ENCODE measurements at regions of chr22 and their contacts with region 1.

Region 1: DNA sequence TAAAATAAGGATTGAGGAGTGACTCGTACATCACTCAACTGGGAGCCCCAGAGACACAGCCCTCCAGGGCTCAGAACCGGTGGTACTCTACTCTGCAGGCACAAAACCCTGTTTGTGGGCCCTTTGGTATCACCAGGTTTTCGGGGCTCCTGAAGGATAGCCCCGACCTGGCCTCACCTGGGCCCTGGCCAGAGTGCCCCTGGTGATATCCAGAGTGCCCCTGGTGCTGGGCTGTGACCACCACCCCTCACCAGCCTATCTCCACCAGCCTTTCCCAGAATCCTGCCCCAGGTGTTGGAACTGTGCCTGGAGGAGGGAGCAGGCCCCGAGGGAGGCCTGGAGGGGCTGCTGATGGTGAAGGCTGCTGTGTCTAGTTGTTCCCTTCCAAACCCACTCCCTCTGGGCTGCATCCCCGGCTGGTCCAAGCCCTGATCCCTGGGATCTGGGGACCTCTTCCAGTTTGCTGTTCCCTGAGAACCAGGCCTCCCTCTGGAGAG is 2.2 kb upstream of the GGT5 start:
- DNase-seq: no peak
- H3K4me3 ChIP-seq: no peak overlapping the region
- CTCF ChIP-seq: no peak
- POLR2A ChIP-seq: no peak

Region 2: GRCh38 chr22:24146194-24146616 is 100.9 kb before region 1 on chr22:
- intact Hi-C with region 1: no loop called
- DNase-seq: no peak
- H3K4me3 ChIP-seq: no peak overlapping the region
- CTCF ChIP-seq: no peak
- POLR2A ChIP-seq: no peak

Region 3: GRCh38 chr22:24189249-24190158 is 57.6 kb before region 1 on chr22:
- intact Hi-C with region 1: loop called (anchors 5 kb)
- DNase-seq: peak; percentile 63 to 93
- H3K4me3 ChIP-seq: no peak overlapping the region
- CTCF ChIP-seq: peak in 1 of 3 donors; percentile 94
- POLR2A ChIP-seq: no peak

Measured in lower leg skin (tissue), 4 donors.